Activated CD4-positive, alpha-beta T cell treated with anti-CD3 and anti-CD28 coated beads for 36 hours (primary cell): ENCODE measurements at regions of chr11 and their contacts with region 1.

Region 1: GRCh38 chr11:76444384-76445123 is at the start of gene EMSY:
- DNase-seq: peak; percentile 95
- ATAC-seq: peak; percentile 94
- H3K4me3 Mint-ChIP-seq: peak within 1 kb of the TSS; percentile 96
- H3K27ac Mint-ChIP-seq: peak within 1 kb of the TSS; percentile 94
- H3K4me1 Mint-ChIP-seq: peaks cover 27% of the 10 kb centered on the region
- H3K27me3 Mint-ChIP-seq: no peaks in the 10 kb centered on the region
- total RNA-seq, gene EMSY: 28.5 to 35.4 TPM

Region 2: GRCh38 chr11:75907906-75908527 is 536.5 kb before region 1 on chr11:
- CTCF ChIA-PET with region 1: no interaction called
- POLR2A ChIA-PET with region 1: no interaction called
- intact Hi-C with region 1: loop called in 1 of 2 experiments (anchors 5 kb)
- DNase-seq: no peak
- ATAC-seq: no peak
- H3K4me3 Mint-ChIP-seq: no peak overlapping the region
- H3K27ac Mint-ChIP-seq: no peak overlapping the region
- H3K4me1 Mint-ChIP-seq: peaks cover 27% of the 10 kb centered on the region
- H3K27me3 Mint-ChIP-seq: no peaks in the 10 kb centered on the region

Region 3: GRCh38 chr11:76380967-76381719 is 63.4 kb before region 1 on chr11 and contains the starts of genes GVQW3 and THAP12:
- CTCF ChIA-PET with region 1: no interaction called
- POLR2A ChIA-PET with region 1: interaction called, 5 read pairs
- intact Hi-C with region 1: loop called (anchors 1 kb)
- DNase-seq: peak; percentile 98
- ATAC-seq: peak; percentile 90
- H3K4me3 Mint-ChIP-seq: peak within 1 kb of the TSS; percentile 82
- H3K27ac Mint-ChIP-seq: peak within 1 kb of the TSS; percentile 95
- H3K4me1 Mint-ChIP-seq: peaks cover 56% of the 10 kb centered on the region
- H3K27me3 Mint-ChIP-seq: no peaks in the 10 kb centered on the region
- total RNA-seq, gene GVQW3: 3.2 to 3.7 TPM
- total RNA-seq, gene THAP12: 53.6 to 60.9 TPM

Region 4: DNA sequence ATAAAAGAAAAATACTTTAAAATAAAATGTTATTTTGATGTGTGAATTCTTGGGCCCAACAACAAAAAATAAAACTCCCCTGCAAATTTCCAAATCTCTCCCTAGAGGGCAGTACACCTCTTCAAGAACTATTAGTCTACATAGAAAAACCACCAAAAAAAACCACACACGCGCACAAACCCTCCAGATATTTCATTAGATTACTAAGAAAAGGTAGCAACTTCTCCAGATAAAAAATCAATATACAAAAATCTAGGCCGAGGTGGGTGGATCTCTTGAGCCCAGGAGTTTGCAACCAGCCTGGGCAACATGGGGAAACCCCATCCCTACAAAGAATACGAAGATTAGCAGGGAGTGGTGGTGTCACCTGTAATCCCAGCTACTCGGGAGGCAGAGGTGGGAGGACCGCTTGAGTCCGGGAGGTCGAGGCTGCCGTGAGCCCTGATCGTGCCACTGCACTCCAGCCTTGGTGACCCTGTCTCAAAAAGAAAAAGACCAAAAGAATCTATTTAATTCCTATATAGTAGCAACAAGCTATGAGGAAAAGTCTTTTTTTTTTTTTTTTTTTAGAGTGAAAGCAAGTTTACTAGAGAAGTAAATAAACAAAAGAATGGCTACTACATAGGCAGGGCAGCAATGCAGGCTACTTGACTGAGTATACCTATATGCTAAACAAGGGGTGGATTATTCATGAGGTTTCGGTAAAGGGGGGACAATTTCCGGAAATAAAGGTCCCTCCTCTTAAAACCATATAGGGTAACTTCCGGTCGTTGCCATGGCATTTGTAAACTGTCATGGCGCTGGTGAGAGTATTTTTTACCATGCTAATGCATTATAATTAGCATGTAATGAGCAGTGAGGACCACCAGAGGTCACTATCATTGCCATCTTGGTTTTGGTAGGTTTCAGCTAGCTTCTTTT is 602.7 kb after region 1 on chr11:
- CTCF ChIA-PET with region 1: no interaction called
- POLR2A ChIA-PET with region 1: no interaction called
- intact Hi-C with region 1: loop called in 1 of 2 experiments (anchors 1 kb)
- DNase-seq: peak; percentile 82
- ATAC-seq: peak; percentile 95
- H3K4me3 Mint-ChIP-seq: peak overlapping the region; percentile 64
- H3K27ac Mint-ChIP-seq: peak overlapping the region; percentile 62
- H3K4me1 Mint-ChIP-seq: peaks cover 12% of the 10 kb centered on the region
- H3K27me3 Mint-ChIP-seq: no peaks in the 10 kb centered on the region

Region 5: GRCh38 chr11:77637345-77638165 is 1193.0 kb after region 1 on chr11 and contains the start of gene CLNS1A:
- CTCF ChIA-PET with region 1: no interaction called
- POLR2A ChIA-PET with region 1: no interaction called
- intact Hi-C with region 1: loop called in 1 of 2 experiments (anchors 10 kb)
- DNase-seq: peak; percentile 91
- ATAC-seq: peak; percentile 98
- H3K4me3 Mint-ChIP-seq: peak within 1 kb of the TSS; percentile 85
- H3K27ac Mint-ChIP-seq: peak within 1 kb of the TSS; percentile 94
- H3K4me1 Mint-ChIP-seq: peaks cover 40% of the 10 kb centered on the region
- H3K27me3 Mint-ChIP-seq: no peaks in the 10 kb centered on the region
- total RNA-seq, gene CLNS1A: 185 to 212 TPM